ENCODE measurements at regions of chr1 and their contacts with region 1.

Region 1: DNA sequence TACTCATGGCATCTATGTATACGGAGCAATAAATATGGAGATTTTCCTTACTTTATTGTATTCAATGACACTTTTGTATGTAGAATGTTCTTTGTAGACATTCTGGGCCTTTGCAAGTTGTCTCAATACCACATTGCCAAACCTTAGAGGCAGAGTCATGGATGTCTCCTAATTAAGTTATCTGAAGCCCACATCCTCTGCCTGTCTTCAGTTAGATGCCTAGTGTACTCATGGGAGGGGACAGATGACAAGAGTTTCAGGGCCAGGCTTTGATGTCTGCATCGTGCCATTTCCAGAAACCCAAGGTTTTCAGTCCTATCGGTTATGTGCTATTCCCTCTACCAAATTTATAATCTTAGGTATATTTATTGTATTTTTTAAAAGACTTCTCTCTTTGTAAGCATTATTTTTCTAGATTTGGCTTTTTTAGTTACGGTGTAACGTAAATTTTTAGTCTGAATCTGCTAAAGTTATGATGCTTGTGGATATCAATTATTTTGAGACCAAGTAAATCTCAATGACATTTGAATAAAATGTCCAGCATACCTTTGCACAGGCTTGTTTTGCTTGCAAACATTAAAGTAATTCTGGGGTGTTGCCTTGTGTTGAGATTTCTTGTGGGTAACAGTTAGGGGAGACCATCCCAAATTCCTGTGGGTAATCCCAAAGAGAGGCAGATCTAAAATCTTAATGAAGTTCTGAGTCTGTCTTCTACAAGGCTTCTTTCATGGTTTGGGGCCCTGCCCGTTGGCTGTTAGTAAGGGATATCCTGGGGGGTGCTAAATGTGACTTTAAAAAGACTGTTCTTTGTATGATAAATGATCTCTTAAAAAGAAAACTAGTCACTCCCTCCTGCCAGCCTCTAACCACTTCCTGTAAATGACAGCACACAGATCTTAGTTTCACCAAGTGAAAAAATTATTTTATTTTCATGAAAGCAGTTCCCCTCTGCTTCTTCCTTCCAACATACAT is 8.0 kb upstream of the MACF1 start:
- DNase-seq: peak; percentile 70
- H3K4me3 ChIP-seq: no peak overlapping the region
- H3K27ac ChIP-seq: peak overlapping the region; percentile 30
- H3K4me1 ChIP-seq: peaks cover 57% of the 10 kb centered on the region
- H3K27me3 ChIP-seq: no peaks in the 10 kb centered on the region
- CTCF ChIP-seq: no peak
- POLR2A ChIP-seq: no peak

Region 2: DNA sequence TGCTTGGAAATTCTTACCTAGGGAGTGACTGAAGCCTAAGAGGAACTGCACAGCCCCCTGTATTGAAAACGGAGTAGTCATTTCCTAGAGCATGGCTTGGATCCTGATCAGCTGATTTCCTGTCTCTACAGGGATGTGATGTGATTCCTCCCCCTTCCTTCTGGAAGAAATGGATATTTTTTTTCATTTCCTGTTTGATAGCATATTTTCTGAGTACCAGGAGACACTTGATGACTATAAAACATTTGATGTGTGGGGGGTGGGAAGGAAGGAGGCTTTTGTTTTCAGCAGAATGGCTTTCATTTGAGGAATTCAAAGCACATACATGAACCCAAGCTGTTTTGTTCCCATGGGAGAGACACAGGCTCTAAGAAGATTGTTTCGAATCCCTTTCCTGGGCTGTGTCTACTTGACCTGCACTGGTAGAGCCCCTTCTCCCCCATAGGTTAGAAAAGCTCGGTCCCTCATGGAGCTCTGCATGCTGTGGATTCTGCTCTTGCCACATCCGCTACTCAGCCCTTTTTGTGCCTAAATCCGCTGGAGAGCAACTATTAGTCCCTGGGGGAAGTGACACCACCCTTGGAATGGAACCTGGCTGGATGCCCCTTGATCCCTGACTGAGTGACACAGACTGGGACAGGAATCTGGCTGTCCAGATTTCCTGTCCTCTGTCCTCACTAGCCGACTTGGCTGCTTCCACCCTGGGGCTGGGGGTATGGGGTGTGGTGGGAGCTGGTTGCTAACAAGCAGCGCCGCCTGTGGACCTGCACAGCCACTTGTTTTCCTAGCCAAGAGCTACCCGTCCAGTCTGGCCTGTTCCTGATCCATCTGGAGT is 63.8 kb before region 1 on chr1:
- CTCF ChIA-PET with region 1: interaction called, 310 read pairs
- POLR2A ChIA-PET with region 1: interaction called, 10 read pairs
- dilution Hi-C with region 1: no loop called
- intact Hi-C with region 1: loop called (anchors 1 kb)
- DNase-seq: peak; percentile 97
- H3K4me3 ChIP-seq: peak overlapping the region in 1 of 3 experiments; percentile 38
- H3K27ac ChIP-seq: peak overlapping the region; percentile 98
- H3K4me1 ChIP-seq: peaks cover 68% of the 10 kb centered on the region
- H3K27me3 ChIP-seq: no peaks in the 10 kb centered on the region
- CTCF ChIP-seq: peak; percentile 68 to 75
- POLR2A ChIP-seq: peak; percentile 32

Region 3: GRCh38 chr1:39183503-39184353 is 12.8 kb before region 1 on chr1:
- CTCF ChIA-PET with region 1: interaction called, 51 read pairs
- POLR2A ChIA-PET with region 1: no interaction called
- dilution Hi-C with region 1: no loop called
- intact Hi-C with region 1: no loop called
- DNase-seq: peak; percentile 91
- H3K4me3 ChIP-seq: no peak overlapping the region
- H3K27ac ChIP-seq: peak overlapping the region; percentile 95
- H3K4me1 ChIP-seq: peaks cover 70% of the 10 kb centered on the region
- H3K27me3 ChIP-seq: no peaks in the 10 kb centered on the region
- CTCF ChIP-seq: peak; percentile 48 to 50
- POLR2A ChIP-seq: peak; percentile 16

Region 4: DNA sequence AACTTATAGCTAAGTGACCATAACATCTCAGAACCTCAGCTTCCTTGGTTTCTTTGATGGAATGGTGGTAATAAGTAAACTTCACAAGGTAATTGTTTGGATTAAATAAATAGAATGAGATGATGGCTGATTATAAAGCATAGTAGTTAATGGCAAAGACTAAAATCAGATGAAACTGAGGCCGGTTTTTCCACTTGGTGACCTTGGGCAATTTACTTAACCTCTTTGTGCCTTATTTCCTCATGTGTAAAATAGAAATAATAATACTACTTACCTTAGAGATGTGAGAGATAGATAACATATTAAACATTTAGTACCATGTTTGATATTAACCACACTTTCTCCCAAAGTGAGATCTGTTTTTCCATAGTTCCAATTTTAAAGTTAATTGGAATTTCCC is 52.6 kb after region 1 on chr1:
- CTCF ChIA-PET with region 1: interaction called, 14 read pairs
- POLR2A ChIA-PET with region 1: no interaction called
- dilution Hi-C with region 1: no loop called
- intact Hi-C with region 1: no loop called
- DNase-seq: no peak
- H3K4me3 ChIP-seq: no peak overlapping the region
- H3K27ac ChIP-seq: no peak overlapping the region
- H3K4me1 ChIP-seq: no peaks in the 10 kb centered on the region
- H3K27me3 ChIP-seq: no peaks in the 10 kb centered on the region
- CTCF ChIP-seq: no peak
- POLR2A ChIP-seq: no peak

Region 5: DNA sequence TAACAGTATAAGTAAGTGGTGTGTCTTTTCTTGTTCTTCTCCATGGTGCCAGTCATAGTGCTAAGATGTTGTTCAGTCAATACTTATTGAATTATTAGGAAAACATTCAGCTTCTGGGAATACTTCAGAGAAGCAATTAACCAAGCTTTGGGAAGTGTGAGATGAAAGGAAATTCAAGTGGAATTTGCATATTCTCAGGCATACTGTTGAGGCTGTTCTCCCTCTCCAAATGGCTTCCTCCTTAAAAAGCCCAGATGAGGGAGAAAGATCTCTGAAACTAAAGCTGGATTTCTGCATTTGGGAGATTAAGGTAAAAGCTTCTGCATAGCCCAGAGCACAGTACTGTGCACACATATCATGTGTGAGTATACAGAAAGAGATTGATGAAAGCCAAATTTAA is 81.3 kb after region 1 on chr1:
- CTCF ChIA-PET with region 1: interaction called, 11 read pairs
- POLR2A ChIA-PET with region 1: no interaction called
- dilution Hi-C with region 1: no loop called
- intact Hi-C with region 1: no loop called
- DNase-seq: no peak
- H3K4me3 ChIP-seq: no peak overlapping the region
- H3K27ac ChIP-seq: no peak overlapping the region
- H3K4me1 ChIP-seq: peaks cover 5% of the 10 kb centered on the region
- H3K27me3 ChIP-seq: no peaks in the 10 kb centered on the region
- CTCF ChIP-seq: no peak
- POLR2A ChIP-seq: no peak

Region 6: DNA sequence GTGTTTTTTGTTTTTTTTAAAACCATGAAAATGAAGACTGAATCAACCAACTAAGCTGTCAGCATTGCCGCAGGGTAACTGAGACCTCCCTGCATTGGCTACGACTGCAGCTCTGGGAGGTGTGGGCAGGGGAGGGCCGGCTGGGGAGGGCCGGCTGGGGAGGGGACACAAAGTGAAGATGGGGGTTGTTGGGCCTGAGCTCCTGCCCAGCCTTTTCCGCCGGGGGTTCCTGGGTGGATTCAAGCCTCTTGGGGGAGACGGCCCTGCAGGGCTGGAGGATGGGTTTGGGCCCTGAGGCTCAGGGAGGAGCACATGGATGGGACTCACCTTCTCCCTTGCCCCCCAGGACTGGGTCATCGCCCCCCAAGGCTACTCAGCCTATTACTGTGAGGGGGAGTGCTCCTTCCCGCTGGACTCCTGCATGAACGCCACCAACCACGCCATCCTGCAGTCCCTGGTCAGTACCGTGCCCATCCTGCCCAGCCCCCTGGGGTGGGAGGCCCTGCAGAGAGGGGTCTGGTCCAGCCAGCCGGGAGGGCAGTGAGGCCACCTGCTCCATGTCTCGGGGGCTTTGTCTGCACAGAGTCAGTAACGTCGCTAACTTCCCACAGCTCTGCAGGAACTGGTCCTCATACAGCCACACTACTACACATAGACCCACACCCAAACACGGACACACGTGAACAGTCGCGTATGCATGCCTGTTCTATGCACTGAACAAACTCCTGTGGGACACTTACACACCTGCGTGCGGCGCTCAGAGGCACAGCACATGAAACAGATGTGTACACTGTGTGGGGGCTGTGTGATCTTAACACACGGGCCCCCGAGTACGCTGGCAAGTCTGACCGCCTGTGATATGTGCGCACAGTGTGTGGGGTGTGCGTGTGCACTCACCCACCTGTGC is 326.4 kb after region 1 on chr1:
- CTCF ChIA-PET with region 1: no interaction called
- POLR2A ChIA-PET with region 1: no interaction called
- dilution Hi-C with region 1: no loop called
- intact Hi-C with region 1: no loop called
- DNase-seq: no peak
- H3K4me3 ChIP-seq: no peak overlapping the region
- H3K27ac ChIP-seq: no peak overlapping the region
- H3K4me1 ChIP-seq: no peaks in the 10 kb centered on the region
- H3K27me3 ChIP-seq: no peaks in the 10 kb centered on the region
- CTCF ChIP-seq: no peak
- POLR2A ChIP-seq: no peak

Region 7: GRCh38 chr1:39720094-39720999 is 523.8 kb after region 1 on chr1:
- CTCF ChIA-PET with region 1: no interaction called
- POLR2A ChIA-PET with region 1: no interaction called
- dilution Hi-C with region 1: no loop called
- intact Hi-C with region 1: no loop called
- DNase-seq: peak; percentile 68
- H3K4me3 ChIP-seq: no peak overlapping the region
- H3K27ac ChIP-seq: no peak overlapping the region
- H3K4me1 ChIP-seq: no peaks in the 10 kb centered on the region
- H3K27me3 ChIP-seq: peaks cover 25 to 55% of the 10 kb centered on the region in 2 experiments
- CTCF ChIP-seq: peak in 1 of 2 donors; percentile 33
- POLR2A ChIP-seq: no peak